Right cardiac atrium (tissue), 5 donors: ENCODE measurements at regions of chr3 and their contacts with region 1.

Region 1: DNA sequence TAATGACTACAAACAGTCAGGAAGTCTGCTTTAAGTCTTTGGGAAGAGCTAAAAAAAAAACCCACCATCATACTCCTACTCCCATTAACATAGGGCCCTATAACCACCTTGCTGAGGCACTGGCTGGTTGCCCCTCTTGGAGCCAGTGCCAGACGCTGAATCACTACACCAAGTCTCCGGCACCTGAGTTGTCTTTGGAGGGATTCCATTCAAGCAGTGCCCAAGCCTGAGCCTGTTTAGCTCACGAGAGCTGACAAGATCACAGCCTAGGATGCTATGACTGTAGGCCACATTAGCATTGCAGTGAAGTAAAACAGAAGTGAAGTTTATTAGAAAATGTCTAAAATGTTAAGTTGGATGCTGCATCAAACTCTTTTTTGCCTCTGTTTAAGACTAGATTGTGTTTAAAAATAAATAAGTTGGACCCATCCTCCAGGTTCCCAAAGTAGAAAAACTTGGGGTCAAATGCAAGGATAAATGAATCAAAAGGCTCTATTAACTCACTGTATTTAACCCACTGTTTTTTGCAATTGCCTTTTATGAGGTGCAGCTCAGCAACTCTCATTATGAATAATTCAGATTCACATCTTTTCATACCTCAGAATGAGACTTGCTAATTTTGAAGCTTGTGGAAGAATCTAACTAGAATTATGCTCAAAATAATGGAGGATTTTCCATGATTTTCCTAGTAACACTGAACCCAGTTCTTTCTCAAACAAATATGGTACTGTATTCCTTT is 461.9 kb downstream of the FOXP1 start:
- DNase-seq: no peak
- ATAC-seq: no peak
- H3K4me3 ChIP-seq: no peak overlapping the region
- H3K27ac ChIP-seq: no peak overlapping the region
- H3K4me1 ChIP-seq: peaks cover 11% of the 10 kb centered on the region
- H3K27me3 ChIP-seq: no peaks in the 10 kb centered on the region

Region 2: GRCh38 chr3:70726961-70727360 is 394.6 kb before region 1 on chr3:
- intact Hi-C with region 1: no loop called
- DNase-seq: no peak
- ATAC-seq: no peak
- H3K4me3 ChIP-seq: no peak overlapping the region
- H3K27ac ChIP-seq: no peak overlapping the region
- H3K4me1 ChIP-seq: no peaks in the 10 kb centered on the region
- H3K27me3 ChIP-seq: no peaks in the 10 kb centered on the region

Region 3: DNA sequence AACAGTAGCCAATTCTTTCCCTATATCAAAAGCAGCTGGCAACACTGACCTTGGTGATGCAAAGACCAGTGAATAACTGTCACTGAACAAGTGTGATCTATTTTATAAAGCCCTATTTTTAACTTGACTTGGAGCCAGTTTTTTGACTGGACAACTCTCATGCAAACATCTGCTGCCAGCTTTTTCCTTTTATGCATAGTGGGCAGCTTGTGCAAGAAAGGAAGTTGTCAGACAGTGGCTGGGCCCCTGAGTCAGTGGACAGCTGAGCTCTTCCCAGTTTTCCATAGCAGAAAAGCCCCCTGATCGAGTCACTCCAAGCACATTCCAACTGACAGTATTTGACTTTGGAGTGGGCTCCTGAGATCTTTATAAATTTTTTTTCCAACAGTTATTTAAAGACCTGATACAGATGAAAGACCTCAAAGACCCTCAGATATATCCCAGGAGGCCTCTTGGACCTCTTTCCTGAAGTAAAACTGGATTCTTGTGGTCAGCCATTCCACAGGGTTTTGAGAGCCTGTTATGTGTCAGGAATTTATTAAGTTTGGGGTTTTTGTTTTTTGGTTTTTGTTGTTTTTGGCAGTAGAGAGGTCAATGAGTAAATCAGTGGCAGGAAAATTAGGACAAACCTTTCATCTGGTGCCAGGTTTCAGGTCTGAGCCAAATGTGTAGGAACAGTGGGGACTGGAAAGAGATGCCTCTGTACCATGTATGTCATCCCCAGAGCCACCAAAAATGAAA is 289.0 kb before region 1 on chr3:
- intact Hi-C with region 1: no loop called
- DNase-seq: peak; percentile 32 to 50 (median 41)
- ATAC-seq: peak; percentile 85 to 86
- H3K4me3 ChIP-seq: no peak overlapping the region
- H3K27ac ChIP-seq: peak overlapping the region; percentile 25
- H3K4me1 ChIP-seq: peaks cover 3% of the 10 kb centered on the region
- H3K27me3 ChIP-seq: no peaks in the 10 kb centered on the region

Region 4: GRCh38 chr3:71305231-71306206 is 183.9 kb after region 1 on chr3:
- intact Hi-C with region 1: loop called in 2 of 4 experiments (anchors 5 to 10 kb)
- DNase-seq: peak in 1 of 3 donors; percentile 35
- ATAC-seq: peak; percentile 89 to 90
- H3K4me3 ChIP-seq: peak overlapping the region; percentile 64
- H3K27ac ChIP-seq: peak overlapping the region; percentile 67
- H3K4me1 ChIP-seq: peaks cover 4% of the 10 kb centered on the region
- H3K27me3 ChIP-seq: no peaks in the 10 kb centered on the region